A673 (cell line): ENCODE measurements at regions of chr14 and their contacts with region 1.

Region 1: DNA sequence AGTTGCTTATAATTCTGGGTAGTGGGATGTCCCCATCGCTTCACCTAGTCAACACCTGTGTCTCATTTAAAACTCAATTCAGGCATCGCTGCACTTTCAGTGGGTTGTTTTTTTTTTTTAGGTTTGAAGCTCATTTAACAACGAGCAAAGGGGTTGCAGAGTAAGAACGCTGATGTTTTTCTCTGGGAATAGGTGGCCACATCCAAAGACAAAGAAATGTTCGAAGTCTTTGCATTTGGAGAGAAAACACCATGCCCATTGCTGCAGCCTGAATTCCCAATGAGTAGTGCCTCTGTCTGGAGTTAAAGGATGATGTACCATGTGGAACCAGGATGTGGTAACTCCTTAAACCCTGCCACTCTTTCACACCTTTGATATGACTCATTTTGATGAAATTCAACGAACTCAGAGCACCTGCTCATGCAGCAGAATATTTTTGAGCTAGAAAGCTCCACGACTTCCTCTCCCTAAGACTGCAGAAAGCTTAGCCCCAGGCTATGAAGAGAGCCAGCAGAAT is 35.1 kb upstream of the BATF start:
- DNase-seq: no peak
- H3K4me3 ChIP-seq: no peak overlapping the region
- H3K27ac ChIP-seq: no peak overlapping the region
- H3K4me1 ChIP-seq: no peaks in the 10 kb centered on the region
- H3K27me3 ChIP-seq: no peaks in the 10 kb centered on the region
- CTCF ChIP-seq: no peak

Region 2: GRCh38 chr14:75132382-75133086 is 354.7 kb before region 1 on chr14:
- CTCF ChIA-PET with region 1: no interaction called
- POLR2A ChIA-PET with region 1: no interaction called
- intact Hi-C with region 1: loop called (anchors 2 kb)
- DNase-seq: peak; percentile 88
- H3K4me3 ChIP-seq: no peak overlapping the region
- H3K27ac ChIP-seq: peak overlapping the region; percentile 12
- H3K4me1 ChIP-seq: peaks cover 21% of the 10 kb centered on the region
- H3K27me3 ChIP-seq: no peaks in the 10 kb centered on the region
- CTCF ChIP-seq: peak; percentile 78

Region 3: DNA sequence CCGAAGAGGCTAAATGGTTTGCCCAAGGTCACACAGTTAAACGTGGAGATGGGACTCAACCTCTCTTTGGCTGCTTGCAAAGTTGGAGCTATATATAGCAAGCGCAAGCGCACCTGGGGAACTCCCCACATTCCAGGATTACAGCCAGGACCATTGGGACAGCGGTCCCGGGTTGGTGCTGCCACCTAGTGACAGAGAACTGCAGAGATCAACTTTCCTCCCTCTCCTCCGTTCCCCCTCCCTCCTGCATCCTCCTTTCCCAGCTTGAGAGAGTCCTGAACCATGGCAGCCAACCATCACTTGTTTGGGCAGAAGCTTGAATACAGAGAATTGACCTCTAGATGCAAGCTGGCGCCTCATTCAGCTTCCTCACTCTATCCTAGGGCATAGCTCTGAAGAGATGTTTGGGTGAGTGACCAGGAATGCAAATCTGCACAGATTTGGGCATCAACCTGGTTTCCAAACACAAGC is 73.8 kb after region 1 on chr14:
- CTCF ChIA-PET with region 1: no interaction called
- POLR2A ChIA-PET with region 1: no interaction called
- intact Hi-C with region 1: no loop called
- DNase-seq: peak; percentile 64
- H3K4me3 ChIP-seq: no peak overlapping the region
- H3K27ac ChIP-seq: no peak overlapping the region
- H3K4me1 ChIP-seq: no peaks in the 10 kb centered on the region
- H3K27me3 ChIP-seq: peaks cover 9% of the 10 kb centered on the region
- CTCF ChIP-seq: peak; percentile 87